AG04449 (cell line): ENCODE measurements at regions of chr6 and their contacts with region 1.

Region 1: GRCh38 chr6:132483779-132484679 is 28.9 kb downstream of the STX7 start:
- DNase-seq: no peak
- H3K4me3 ChIP-seq: no peak overlapping the region
- CTCF ChIP-seq: peak; percentile 20

Region 2: DNA sequence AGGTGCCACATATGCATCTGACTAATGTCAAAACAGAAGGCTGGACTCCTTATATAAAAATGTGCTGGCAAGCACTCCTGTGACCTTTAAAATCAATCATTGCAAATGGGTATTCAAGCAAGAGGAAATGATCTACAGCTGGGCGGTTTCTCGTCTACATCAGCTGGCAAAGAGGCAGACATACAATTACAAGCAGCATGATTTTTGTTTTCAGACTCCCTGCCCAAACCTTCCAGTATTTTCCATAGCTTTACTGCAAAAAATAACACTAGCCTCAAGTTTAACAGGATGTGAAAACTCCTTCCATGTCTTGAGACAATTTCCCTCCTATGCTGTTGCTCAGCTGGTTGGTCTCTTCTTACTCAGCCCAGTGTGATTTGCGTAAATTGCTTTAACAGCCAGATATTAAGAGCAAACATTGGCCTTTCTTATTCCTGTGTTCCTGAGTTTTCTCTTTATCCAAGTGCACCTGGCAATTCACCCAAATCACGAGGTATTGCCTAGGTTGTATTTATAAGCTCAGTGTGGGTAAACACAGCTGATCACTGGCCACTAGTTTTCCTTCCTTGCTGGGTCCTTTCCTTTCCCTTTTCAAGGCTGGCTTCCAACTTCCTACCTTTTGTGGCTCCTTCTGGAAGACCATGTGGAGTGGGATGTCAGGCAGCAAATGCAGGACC is 213.2 kb before region 1 on chr6:
- CTCF ChIA-PET with region 1: interaction called, 326 read pairs
- POLR2A ChIA-PET with region 1: no interaction called
- DNase-seq: no peak
- H3K4me3 ChIP-seq: no peak overlapping the region
- CTCF ChIP-seq: no peak

Region 3: DNA sequence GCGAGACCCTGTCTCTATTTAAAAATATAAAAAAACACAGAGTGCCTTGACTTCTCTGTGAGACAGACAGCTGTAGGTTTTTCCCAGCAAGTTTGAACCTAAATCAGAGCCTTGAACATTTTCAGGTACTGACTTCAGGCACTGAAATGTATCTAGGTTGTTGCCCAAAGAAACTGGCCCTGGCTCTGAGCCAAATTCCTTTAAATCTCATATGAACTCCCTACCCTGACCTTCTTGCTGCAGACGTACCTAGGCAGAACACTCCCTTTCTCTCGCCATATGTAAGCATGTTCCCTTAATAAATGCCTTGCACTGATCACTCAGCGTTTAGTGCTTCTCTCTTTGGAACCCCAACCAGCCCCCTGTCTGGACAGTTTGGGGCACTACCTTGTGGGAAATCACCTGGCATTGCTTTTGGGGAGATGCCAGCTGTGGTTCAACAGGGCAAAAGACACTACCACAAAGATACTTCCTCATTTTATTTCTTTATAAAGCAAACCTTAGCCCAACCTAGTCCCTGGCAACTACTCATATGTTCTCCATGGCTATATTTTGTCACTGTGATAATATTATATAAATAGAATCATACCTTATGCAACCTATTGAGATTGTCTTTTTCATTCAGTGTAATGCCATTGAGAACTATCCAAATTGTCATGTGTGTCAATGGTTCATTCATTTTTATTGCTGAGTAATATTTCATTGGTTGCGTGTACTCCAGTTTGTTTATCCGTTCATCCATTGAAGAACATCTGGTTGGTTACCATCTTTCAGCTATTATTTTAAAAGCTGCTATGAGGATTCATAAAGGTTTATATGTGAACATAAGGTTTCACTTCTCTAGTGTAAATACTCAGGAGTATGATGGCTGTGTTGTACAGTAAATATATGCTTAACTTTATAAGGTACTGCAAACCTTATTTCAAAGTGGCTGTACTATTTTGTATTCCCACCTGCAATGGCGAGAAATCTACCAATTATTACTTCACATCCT is 197.7 kb before region 1 on chr6:
- CTCF ChIA-PET with region 1: interaction called, 326 read pairs
- POLR2A ChIA-PET with region 1: no interaction called
- DNase-seq: no peak
- H3K4me3 ChIP-seq: no peak overlapping the region
- CTCF ChIP-seq: no peak

Region 4: DNA sequence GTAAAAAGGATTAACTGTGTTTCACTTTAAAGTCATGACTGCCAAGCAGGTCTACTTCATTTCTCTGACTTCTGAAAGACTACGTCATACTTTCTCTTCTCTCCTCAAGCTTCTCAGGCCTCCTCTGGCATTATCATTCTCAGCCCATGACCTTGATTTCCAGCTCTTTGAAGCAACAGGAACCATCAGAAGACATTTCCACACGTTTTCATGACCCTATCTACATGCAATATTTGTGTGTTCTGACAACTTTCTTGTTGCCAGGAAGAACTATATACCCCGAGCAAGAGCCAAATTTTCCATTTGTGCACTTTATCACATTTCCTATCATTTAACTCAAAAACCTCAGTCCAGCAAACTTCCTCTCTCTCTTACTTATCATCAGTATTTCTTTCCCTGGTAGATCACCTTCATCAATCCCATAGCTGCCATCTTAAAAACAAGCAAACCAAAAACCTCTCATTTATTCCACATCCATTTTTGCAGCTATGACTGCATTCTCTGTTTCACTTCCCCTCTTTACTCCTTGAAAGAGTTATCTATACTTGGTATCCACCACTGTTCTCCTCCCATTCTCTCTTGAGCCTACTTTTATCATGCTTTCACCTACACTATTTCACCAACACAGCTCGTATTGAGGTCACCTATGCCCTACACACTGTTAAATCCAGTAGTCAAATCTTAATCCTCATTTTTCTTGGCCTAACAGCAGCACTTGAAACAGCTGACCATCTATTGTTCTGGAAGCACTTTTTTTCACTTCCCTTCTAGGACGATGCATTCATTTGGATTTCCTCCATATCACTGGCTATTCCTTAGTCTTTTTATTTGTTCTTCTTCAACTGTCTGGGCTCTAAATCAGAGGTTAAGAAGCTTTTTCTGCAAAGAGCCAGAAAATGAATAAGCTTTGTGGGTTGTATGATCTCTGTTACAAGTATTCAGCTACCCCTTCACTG is 18.2 kb before region 1 on chr6:
- CTCF ChIA-PET with region 1: interaction called, 27 read pairs
- POLR2A ChIA-PET with region 1: no interaction called
- DNase-seq: no peak
- H3K4me3 ChIP-seq: no peak overlapping the region
- CTCF ChIP-seq: no peak

Region 5: GRCh38 chr6:132471788-132472187 is 12.2 kb before region 1 on chr6:
- CTCF ChIA-PET with region 1: interaction called, 27 read pairs
- POLR2A ChIA-PET with region 1: no interaction called
- DNase-seq: no peak
- H3K4me3 ChIP-seq: no peak overlapping the region
- CTCF ChIP-seq: no peak

Region 6: DNA sequence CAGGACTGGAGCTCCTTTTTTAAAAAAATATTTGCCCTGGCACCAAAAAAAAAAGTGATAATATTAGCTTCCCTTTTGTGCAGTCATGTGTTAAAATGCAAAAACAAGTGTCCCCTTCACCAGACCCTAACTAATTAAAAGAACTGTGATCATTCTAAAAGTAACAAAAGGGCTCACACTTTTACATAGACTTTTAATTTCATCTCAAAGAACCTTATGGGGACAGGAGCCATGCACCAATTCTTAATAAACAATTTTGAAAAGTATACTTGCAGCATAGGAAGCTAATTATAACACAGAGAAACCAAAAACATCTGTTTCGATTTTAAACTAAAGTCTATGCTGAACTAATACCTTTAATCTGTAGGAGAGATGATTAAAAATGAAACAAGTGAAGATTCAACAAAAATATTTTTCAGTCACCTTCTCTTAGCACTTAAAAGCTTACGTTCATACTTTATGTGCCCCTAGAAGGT is 11.6 kb after region 1 on chr6:
- CTCF ChIA-PET with region 1: interaction called, 29 read pairs
- POLR2A ChIA-PET with region 1: no interaction called
- DNase-seq: no peak
- H3K4me3 ChIP-seq: no peak overlapping the region
- CTCF ChIP-seq: no peak

Region 7: GRCh38 chr6:132962936-132963868 is 479.2 kb after region 1 on chr6:
- CTCF ChIA-PET with region 1: no interaction called
- POLR2A ChIA-PET with region 1: no interaction called
- DNase-seq: no peak
- H3K4me3 ChIP-seq: no peak overlapping the region
- CTCF ChIP-seq: peak; percentile 79